ENCODE measurements at regions of chr18 and their contacts with region 1.

Region 1: GRCh38 chr18:42635378-42636048 is 480.0 kb downstream of the RIT2 start:
- DNase-seq: no peak
- ATAC-seq: peak in 4 of 8 donors; percentile 20 to 71 (median 38)
- H3K4me3 ChIP-seq: no peak overlapping the region
- H3K27ac ChIP-seq: no peak overlapping the region
- H3K4me1 ChIP-seq: no peaks in the 10 kb centered on the region
- H3K27me3 ChIP-seq: no peaks in the 10 kb centered on the region
- CTCF ChIP-seq: no peak

Region 2: DNA sequence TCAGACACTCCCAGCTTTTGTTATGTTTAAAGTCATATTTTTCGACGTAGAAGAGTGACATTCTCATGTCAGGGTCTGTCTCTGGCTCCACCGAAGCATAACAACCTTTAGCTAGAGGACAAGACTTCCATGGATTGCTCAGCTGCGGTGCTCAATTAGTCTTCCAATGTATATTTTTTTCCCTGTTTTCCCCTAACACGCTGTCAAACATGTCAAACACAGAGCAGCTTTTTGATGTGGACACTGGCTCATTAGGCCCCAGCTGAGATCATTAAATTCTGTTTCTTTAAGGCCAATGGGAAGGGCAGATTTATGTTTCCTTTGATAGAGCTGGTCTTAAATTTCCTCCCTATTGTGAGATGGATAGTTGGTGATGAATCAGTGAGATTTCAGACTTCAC is 155.1 kb before region 1 on chr18:
- intact Hi-C with region 1: no loop called
- DNase-seq: no peak
- ATAC-seq: no peak
- H3K4me3 ChIP-seq: no peak overlapping the region
- H3K27ac ChIP-seq: no peak overlapping the region
- H3K4me1 ChIP-seq: no peaks in the 10 kb centered on the region
- H3K27me3 ChIP-seq: no peaks in the 10 kb centered on the region
- CTCF ChIP-seq: no peak

Region 3: DNA sequence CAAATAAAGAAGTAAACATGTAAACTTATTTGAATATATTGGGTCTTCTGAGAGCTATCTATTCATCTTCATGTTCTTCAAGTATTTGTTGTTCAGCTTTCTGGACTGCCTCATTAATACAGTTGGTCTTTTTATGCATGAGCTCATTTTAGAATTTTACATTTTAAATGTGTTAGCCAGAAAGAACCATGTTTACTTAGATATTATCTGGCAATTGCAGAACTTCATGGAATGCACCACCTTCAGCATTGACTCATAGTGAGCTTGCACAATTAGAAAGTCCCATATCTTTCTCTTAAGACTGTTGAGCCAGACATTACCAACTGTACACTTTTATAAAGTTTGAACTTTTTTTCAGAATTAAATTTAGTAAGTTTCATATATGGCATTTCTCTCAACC is 56.7 kb before region 1 on chr18:
- intact Hi-C with region 1: loop called in 1 of 10 experiments (anchors 10 kb)
- DNase-seq: no peak
- ATAC-seq: peak in 1 of 8 donors; percentile 61
- H3K4me3 ChIP-seq: no peak overlapping the region
- H3K27ac ChIP-seq: no peak overlapping the region
- H3K4me1 ChIP-seq: no peaks in the 10 kb centered on the region
- H3K27me3 ChIP-seq: no peaks in the 10 kb centered on the region
- CTCF ChIP-seq: no peak

Measured in heart right ventricle (tissue), 16 donors.